ENCODE measurements at regions of chr3 and their contacts with region 1.

Region 1: GRCh38 chr3:194691481-194692283 is 6.0 kb downstream of the FAM43A start:
- DNase-seq: peak; percentile 68
- H3K4me3 ChIP-seq: no peak overlapping the region
- H3K27ac ChIP-seq: peak overlapping the region; percentile 39
- H3K4me1 ChIP-seq: peaks cover 19% of the 10 kb centered on the region
- H3K27me3 ChIP-seq: no peaks in the 10 kb centered on the region
- CTCF ChIP-seq: no peak
- POLR2A ChIP-seq: peak; percentile 76

Region 2: GRCh38 chr3:194512895-194513601 is 178.6 kb before region 1 on chr3:
- CTCF ChIA-PET with region 1: no interaction called
- POLR2A ChIA-PET with region 1: no interaction called
- dilution Hi-C with region 1: no loop called
- intact Hi-C with region 1: no loop called
- DNase-seq: no peak
- H3K4me3 ChIP-seq: no peak overlapping the region
- H3K27ac ChIP-seq: no peak overlapping the region
- H3K4me1 ChIP-seq: no peaks in the 10 kb centered on the region
- H3K27me3 ChIP-seq: no peaks in the 10 kb centered on the region
- CTCF ChIP-seq: no peak
- POLR2A ChIP-seq: no peak

Region 3: GRCh38 chr3:194711913-194712312 is 20.2 kb after region 1 on chr3:
- CTCF ChIA-PET with region 1: interaction called, 4 read pairs
- POLR2A ChIA-PET with region 1: no interaction called
- dilution Hi-C with region 1: no loop called
- intact Hi-C with region 1: loop called (anchors 1 kb)
- DNase-seq: peak; percentile 97
- H3K4me3 ChIP-seq: no peak overlapping the region
- H3K27ac ChIP-seq: peak overlapping the region; percentile 73
- H3K4me1 ChIP-seq: peaks cover 28% of the 10 kb centered on the region
- H3K27me3 ChIP-seq: no peaks in the 10 kb centered on the region
- CTCF ChIP-seq: no peak
- POLR2A ChIP-seq: no peak

Region 4: DNA sequence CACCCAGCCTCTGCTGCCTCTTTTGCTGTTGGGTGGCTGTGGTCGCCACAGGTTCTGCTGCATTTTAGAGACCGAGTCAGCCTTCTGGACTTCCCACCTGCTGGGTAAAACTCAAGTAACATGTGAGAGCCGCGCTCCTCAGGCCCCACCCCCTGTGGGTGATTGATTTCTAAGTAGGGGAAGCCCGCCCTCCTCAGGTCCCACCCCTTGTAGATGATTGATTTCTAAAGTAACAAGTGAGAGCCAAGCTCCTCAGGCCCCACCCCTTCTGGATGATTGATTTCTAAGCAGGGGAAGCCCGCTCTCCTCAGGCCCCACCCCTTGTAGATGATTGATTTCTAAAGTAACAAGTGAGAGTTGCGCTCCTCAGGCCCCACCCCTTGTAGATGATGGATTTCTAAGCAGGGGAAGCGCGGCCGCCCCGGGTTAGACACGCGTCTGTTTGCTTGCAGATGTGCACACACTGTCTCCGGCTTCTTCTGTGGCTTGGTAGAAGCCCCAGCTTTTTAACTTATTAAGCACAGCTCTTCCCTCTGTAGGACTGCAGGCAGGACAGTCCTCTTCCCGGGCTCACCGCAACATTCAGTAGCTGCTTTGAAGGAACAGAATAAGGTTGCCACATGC is 77.5 kb after region 1 on chr3:
- CTCF ChIA-PET with region 1: no interaction called
- POLR2A ChIA-PET with region 1: no interaction called
- dilution Hi-C with region 1: no loop called
- intact Hi-C with region 1: loop called (anchors 1 kb)
- DNase-seq: peak; percentile 99
- H3K4me3 ChIP-seq: peak overlapping the region in 1 of 3 experiments; percentile 25
- H3K27ac ChIP-seq: no peak overlapping the region
- H3K4me1 ChIP-seq: peaks cover 24% of the 10 kb centered on the region
- H3K27me3 ChIP-seq: no peaks in the 10 kb centered on the region
- CTCF ChIP-seq: no peak
- POLR2A ChIP-seq: peak; percentile 64

Region 5: GRCh38 chr3:194871143-194871863 is 179.6 kb after region 1 on chr3:
- CTCF ChIA-PET with region 1: interaction called, 4 read pairs
- POLR2A ChIA-PET with region 1: interaction called, 6 read pairs
- dilution Hi-C with region 1: no loop called
- intact Hi-C with region 1: loop called (anchors 1 kb)
- DNase-seq: peak; percentile 71
- H3K4me3 ChIP-seq: no peak overlapping the region
- H3K27ac ChIP-seq: peak overlapping the region; percentile 73
- H3K4me1 ChIP-seq: peaks cover 50% of the 10 kb centered on the region
- H3K27me3 ChIP-seq: no peaks in the 10 kb centered on the region
- CTCF ChIP-seq: no peak
- POLR2A ChIP-seq: no peak

Region 6: DNA sequence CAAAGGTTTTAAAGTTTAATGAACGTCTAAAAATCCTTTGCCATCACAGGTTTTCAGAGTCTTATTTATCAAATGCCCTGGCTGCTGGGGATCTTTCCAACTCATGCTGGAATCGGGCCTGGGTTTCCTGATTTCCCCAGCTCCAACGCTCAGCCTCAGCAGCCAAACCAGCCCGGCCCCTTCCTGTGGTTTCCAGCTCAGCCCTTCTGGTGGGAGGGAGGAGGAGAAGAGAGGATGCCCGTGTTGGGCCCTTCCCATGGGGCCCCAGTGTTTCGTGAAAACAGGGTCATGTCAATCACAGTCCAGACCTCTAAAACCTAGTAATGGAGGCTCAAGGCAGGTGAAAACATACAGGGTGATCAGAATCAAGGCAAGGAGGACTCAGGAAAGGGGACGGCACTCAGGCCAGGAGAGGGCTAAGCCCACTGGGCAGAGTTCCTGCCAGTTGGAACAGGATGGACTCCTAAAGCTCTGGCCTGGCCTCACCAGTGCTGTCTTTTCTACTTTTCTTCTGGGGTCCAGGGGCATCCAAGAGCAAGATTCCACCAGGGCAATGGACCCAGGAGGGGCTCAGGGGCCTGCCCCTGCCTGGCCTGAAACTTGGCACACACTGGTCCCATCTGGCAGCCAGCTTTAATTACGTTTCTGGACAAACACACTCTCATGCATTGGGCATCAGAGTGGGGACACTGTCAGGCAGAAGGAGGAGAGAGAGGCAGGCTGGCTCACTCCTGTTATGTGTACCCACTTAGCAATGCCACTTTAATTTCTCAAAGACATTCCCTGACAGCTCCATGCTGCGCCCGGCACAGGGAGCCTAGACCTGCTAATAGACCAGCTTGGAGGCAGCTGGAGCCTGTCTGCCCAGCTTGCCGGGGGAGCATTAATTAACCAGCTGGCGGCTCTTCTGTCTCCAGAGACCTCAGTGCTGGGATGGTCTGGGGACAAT is 188.6 kb after region 1 on chr3:
- CTCF ChIA-PET with region 1: interaction called, 3 read pairs
- POLR2A ChIA-PET with region 1: interaction called, 5 read pairs
- dilution Hi-C with region 1: no loop called
- intact Hi-C with region 1: loop called (anchors 1 kb)
- DNase-seq: peak; percentile 80
- H3K4me3 ChIP-seq: no peak overlapping the region
- H3K27ac ChIP-seq: peak overlapping the region; percentile 54
- H3K4me1 ChIP-seq: peaks cover 28% of the 10 kb centered on the region
- H3K27me3 ChIP-seq: no peaks in the 10 kb centered on the region
- CTCF ChIP-seq: no peak
- POLR2A ChIP-seq: no peak